ENCODE measurements at regions of chr16 and their contacts with region 1.

Region 1: DNA sequence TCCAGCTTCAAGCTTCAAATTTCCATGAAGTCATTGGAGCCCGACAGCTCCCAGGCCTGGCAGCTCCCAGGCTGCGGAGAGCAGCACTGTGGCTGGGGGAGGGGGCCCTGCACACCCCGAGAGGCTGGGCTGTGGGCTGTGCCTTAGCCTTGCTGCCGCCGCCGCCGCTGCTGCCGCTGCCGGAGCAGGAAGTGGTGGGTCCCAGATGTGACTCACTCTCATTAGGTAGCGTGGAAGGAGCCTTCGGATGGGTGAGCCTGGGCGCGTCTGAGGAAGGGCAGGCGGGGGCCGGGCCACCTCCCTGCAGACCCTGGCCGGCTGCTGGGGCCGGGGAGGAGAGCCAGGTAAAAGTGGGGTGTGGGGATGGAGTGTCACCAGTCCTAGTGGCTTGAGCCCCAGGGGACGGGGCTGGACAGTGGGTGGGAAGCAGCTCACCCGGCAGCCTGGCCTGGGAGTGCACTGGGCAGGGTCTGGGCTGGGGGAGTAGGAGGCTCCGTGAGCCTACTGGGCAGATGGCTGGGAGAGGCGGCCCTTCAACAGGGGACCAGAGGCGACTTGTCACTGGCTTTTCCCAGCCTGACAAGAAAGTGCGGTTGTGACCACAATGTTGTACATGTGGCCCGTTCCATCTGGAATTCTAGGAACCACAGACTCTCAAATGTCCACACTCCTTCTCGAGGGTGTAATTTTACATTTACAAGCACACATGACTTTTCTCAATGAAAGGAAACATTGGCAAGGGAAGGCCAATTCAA is at the start of gene ADCY7:
- DNase-seq: peak; percentile 95
- H3K4me3 Mint-ChIP-seq: peak within 1 kb of the TSS; percentile 96
- H3K27ac Mint-ChIP-seq: peak within 1 kb of the TSS; percentile 96
- H3K4me1 Mint-ChIP-seq: peaks cover 60% of the 10 kb centered on the region
- H3K27me3 Mint-ChIP-seq: no peaks in the 10 kb centered on the region
- total RNA-seq, gene ADCY7: 85.6 and 86.2 TPM in 2 replicates

Region 2: GRCh38 chr16:50245417-50246298 is 20.9 kb before region 1 on chr16:
- intact Hi-C with region 1: loop called (anchors 1 kb)
- DNase-seq: peak; percentile 87
- H3K4me3 Mint-ChIP-seq: peak overlapping the region; percentile 83
- H3K27ac Mint-ChIP-seq: peak overlapping the region; percentile 79
- H3K4me1 Mint-ChIP-seq: peaks cover 17% of the 10 kb centered on the region
- H3K27me3 Mint-ChIP-seq: peaks cover 14% of the 10 kb centered on the region

Region 3: DNA sequence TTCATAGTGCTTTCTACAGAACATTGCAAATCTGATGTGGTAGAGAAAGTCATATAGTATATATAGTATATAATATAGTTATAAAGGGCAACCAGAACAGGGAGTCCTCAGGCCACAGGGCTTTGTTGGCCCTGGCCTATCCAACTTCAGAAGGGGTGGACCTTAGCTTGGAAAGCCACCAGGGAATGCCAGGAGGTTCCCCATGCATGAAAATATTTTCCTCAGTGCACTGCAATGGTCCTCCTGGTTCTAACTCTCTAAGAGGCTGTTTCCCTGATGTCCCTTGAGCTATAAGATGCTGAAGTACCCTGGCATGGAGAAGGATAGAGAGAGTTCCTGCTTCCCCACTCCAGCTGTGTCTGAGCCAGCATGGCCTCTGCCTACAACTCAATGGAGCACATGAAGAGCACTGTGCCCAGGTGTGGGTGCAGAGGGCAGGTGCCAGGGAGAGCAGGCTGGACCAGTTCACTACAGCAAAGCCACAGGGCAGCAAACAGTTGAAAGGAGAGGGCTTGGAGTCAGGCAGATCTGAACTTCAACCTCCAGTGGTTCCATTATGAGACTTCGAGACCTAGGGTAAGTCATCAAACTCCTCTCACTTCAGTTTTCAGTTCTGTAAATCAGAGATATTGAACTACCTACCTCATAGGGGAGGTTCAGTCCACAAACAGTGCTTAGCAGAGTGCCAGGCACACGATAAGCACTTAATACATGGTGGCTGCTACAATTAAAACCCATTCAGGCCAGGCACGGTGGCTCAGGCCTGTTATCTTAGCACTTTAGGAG is 701.5 kb after region 1 on chr16:
- intact Hi-C with region 1: no loop called
- DNase-seq: no peak
- H3K4me3 Mint-ChIP-seq: no peak overlapping the region
- H3K27ac Mint-ChIP-seq: no peak overlapping the region
- H3K4me1 Mint-ChIP-seq: no peaks in the 10 kb centered on the region
- H3K27me3 Mint-ChIP-seq: peaks cover 1% of the 10 kb centered on the region